ENCODE measurements at regions of chr3 and their contacts with region 1.

Region 1: DNA sequence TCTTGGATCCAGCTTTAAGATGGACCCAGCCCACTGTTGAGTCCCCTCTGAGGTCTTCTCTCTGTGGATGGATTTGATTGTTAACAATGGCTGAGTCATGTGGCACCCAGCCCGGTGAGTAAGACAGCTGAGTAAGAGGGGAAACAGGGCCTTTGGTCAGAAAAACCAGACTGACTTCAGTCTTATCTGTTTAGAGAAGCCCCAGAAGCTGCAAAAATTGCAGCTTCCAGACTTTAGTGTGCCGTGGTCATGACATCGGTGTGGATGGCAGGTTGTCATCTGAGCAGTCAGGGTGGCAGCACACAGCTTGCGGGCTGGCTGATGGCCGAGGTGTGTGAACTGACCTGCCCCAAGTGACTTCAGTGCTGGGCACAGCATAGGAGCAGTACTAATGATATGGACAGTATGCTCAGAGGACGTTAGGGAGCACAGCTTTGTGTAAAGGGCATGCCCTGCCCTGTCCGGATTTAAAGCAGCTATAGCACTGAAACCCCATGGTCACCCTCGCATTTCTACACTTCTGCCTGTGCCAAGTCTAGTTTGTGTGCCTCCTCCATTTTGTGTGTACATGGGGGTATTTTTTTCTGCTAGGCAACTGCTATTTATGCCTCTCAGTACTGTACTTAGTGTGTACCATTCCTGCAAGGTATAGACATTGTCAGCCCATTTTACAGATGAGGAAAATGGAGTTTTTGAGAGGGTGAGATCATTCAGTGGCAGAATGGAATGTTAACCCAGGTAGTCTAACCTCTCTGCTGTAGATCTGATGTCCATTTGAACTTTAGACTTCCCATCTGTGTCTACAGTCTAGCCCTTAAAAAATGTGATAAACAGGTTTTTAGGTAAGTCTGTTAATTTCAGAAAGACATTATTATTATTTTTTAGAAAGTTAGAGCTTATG is 44.4 kb downstream of the FLNB start:
- DNase-seq: peak; percentile 87
- ATAC-seq: peak; percentile 83
- H3K4me3 ChIP-seq: peak overlapping the region in 1 of 2 experiments; percentile 2; a peak in 2 of 4 replicates
- H3K27ac ChIP-seq: peak overlapping the region; percentile 97
- H3K4me1 ChIP-seq: peaks cover 73% of the 10 kb centered on the region
- H3K27me3 ChIP-seq: no peaks in the 10 kb centered on the region
- CTCF ChIP-seq: no peak

Region 2: GRCh38 chr3:58013973-58014649 is 38.5 kb before region 1 on chr3:
- CTCF ChIA-PET with region 1: no interaction called
- POLR2A ChIA-PET with region 1: no interaction called
- in situ Hi-C with region 1: no loop called
- intact Hi-C with region 1: loop called (anchors 5 kb)
- DNase-seq: no peak
- ATAC-seq: no peak
- H3K4me3 ChIP-seq: no peak overlapping the region
- H3K27ac ChIP-seq: peak overlapping the region; percentile 54
- H3K4me1 ChIP-seq: peaks cover 60% of the 10 kb centered on the region
- H3K27me3 ChIP-seq: no peaks in the 10 kb centered on the region
- CTCF ChIP-seq: no peak

Region 3: DNA sequence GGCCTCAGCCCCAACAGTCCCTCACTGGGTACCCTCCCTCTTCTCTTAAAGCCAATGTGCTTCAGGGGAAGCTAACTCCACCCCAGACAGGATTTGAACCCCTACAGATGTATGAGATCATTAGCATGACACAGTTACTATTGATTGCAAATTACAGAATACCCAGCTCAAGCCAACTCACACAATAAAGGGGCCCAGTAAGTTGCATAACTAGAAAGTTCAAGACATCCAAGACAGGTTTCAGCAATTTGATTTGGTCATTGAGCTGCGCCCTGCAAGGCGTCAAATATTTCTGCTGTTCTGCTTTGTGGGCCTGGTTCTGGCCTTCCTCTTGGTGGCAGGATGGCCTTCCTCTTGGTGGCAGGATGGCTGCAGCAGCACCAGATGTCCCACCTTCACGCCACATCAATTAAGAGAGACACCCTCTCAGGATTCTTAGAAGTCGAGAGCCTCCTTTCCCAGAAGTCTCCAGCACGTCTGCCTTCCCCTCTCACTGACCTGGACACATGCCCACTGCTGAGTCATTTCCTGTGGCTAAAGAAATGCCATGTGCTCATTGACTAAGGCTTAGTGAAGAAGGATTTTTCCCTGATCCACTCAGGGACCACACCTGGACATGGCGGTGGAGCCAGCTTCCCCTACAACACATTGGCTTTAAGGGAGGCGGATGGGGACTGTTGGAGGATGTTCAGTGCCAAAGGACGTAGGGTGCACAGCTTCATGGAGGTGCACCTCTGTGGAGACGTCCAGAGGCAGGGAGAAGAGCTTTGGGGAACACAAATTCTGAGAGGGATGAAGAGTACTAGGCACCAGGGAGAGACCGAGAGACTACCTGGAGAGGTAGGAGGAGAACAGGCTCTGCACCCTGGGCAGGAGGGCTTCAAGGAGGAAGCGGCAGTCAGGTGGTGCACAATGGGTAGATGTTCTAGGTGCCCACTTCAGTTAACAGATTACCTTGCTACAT is 109.1 kb after region 1 on chr3:
- CTCF ChIA-PET with region 1: no interaction called
- POLR2A ChIA-PET with region 1: interaction called, 15 read pairs
- in situ Hi-C with region 1: no loop called
- intact Hi-C with region 1: no loop called
- DNase-seq: peak; percentile 74
- ATAC-seq: peak; percentile 29; the same call in 1 of the 2 replicates
- H3K4me3 ChIP-seq: no peak overlapping the region
- H3K27ac ChIP-seq: peak overlapping the region; percentile 84
- H3K4me1 ChIP-seq: peaks cover 63% of the 10 kb centered on the region
- H3K27me3 ChIP-seq: no peaks in the 10 kb centered on the region
- CTCF ChIP-seq: no peak

Measured in Panc1 (cell line).